Caco-2 (cell line): ENCODE measurements at regions of chr6 and their contacts with region 1.

Region 1: DNA sequence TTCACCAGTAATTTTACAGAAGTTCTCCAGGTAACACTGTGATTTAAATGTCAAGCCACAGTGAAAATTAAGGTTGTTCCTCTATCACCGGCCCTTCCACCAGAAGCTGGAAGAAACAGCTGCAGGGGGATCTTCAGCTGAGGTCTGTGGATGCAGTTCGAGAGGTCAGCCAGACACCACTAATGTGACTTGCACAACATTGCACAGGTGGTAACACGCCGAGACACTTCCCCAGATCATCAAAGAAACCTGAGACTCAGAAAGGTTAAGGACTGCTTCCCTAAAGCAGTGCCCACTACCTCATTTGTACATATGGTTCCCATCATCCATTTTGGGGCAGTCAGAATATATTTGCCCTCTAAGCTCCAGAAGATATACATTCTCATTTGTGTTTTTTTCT is 8.1 kb upstream of the SERPINB9 start:
- DNase-seq: no peak
- H3K4me3 ChIP-seq: no peak overlapping the region
- H3K4me3 Mint-ChIP-seq: no peak overlapping the region
- H3K27ac Mint-ChIP-seq: no peak overlapping the region
- H3K4me1 ChIP-seq: peaks cover 22% of the 10 kb centered on the region
- H3K4me1 Mint-ChIP-seq: peaks cover 46% of the 10 kb centered on the region
- H3K27me3 ChIP-seq: no peaks in the 10 kb centered on the region
- H3K27me3 Mint-ChIP-seq: no peaks in the 10 kb centered on the region
- CTCF ChIP-seq: no peak

Region 2: DNA sequence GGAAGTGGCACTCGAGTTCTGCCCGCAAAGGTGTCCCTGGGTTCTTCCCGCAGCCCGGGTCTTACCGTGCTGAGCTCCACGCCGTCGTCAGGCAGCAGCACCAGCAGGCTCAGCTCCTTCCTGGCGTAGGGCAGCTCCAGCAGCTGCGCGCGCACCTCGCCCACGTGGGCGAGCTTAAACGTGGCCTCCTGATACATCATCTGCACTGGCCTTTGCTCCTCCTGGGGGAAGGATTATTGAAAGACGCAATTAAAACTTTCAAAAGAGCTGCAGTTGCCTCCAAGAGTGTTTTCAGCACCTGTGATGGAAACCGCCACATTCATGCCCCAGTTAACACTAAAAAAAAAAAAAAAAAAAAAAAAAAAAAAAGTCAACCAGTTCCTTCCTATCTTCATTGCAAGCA is 19.4 kb before region 1 on chr6:
- CTCF ChIA-PET with region 1: interaction called, 6 read pairs
- POLR2A ChIA-PET with region 1: no interaction called
- intact Hi-C with region 1: loop called (anchors 1 kb)
- DNase-seq: peak; percentile 92 to 93
- H3K4me3 ChIP-seq: peak overlapping the region; percentile 71
- H3K4me3 Mint-ChIP-seq: peak overlapping the region; percentile 92
- H3K27ac Mint-ChIP-seq: peak overlapping the region; percentile 80
- H3K4me1 ChIP-seq: peaks cover 8% of the 10 kb centered on the region; the same call in 1 of the 2 replicates
- H3K4me1 Mint-ChIP-seq: peaks cover 10% of the 10 kb centered on the region
- H3K27me3 ChIP-seq: no peaks in the 10 kb centered on the region
- H3K27me3 Mint-ChIP-seq: no peaks in the 10 kb centered on the region
- CTCF ChIP-seq: no peak